ENCODE measurements at regions of chr1 and their contacts with region 1.

Region 1: DNA sequence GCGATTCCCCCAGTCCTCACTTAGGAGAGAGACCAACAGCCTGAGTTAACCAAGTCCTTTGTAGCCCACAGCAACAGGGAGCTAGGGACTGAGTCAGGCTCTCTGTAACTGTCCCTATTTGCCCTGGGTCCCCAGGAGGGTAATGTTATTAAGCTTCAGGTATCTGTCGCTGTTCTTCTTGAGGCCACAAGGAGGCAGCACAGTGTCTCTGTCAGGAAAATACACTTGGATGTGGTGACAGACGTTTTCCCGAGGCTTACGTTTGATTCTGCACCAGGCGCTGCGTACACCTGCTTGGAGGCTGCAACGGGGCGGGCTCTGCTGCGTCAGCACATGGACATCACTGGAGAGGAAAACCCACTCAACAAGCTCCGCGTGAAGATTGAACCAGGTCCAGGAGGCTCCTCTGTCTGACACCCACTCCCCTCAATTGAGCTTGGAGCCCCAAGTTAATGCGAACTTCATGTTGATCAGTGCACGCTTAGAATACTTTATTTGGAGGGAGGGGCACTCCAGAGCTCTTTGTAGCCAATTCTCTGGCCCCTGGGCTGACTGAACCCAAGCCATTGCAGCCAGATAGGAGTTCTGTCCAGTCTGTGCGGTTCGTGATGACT is 10.7 kb upstream of the ELF3 start:
- DNase-seq: peak; percentile 67
- CTCF ChIP-seq: peak; percentile 65

Region 2: GRCh38 chr1:201769966-201770365 is 229.8 kb before region 1 on chr1:
- CTCF ChIA-PET with region 1: no interaction called
- POLR2A ChIA-PET with region 1: no interaction called
- DNase-seq: no peak
- CTCF ChIP-seq: no peak

Region 3: DNA sequence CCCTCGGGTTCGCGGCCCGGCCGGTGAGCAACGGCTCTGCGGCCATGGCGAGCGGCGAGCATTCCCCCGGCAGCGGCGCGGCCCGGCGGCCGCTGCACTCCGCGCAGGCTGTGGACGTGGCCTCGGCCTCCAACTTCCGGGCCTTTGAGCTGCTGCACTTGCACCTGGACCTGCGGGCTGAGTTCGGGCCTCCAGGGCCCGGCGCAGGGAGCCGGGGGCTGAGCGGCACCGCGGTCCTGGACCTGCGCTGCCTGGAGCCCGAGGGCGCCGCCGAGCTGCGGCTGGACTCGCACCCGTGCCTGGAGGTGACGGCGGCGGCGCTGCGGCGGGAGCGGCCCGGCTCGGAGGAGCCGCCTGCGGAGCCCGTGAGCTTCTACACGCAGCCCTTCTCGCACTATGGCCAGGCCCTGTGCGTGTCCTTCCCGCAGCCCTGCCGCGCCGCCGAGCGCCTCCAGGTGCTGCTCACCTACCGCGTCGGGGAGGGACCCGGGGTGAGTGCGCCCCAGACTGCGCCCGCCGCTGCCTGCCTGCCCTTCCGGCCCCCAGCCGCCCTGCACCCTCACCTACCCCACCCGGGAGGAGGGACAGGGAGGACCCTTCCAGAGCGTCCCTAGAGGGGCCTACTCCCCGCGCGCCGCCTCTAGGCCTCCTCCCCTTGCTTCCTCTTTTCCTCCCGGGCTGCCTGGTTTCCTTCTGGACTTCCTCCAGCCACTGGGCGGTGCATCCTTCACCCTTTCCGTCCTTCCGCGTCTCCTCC is 16.9 kb before region 1 on chr1 and contains the start of gene RNPEP:
- CTCF ChIA-PET with region 1: interaction called, 37 read pairs
- POLR2A ChIA-PET with region 1: interaction called, 9 read pairs
- DNase-seq: peak; percentile 65
- CTCF ChIP-seq: no peak

Region 4: DNA sequence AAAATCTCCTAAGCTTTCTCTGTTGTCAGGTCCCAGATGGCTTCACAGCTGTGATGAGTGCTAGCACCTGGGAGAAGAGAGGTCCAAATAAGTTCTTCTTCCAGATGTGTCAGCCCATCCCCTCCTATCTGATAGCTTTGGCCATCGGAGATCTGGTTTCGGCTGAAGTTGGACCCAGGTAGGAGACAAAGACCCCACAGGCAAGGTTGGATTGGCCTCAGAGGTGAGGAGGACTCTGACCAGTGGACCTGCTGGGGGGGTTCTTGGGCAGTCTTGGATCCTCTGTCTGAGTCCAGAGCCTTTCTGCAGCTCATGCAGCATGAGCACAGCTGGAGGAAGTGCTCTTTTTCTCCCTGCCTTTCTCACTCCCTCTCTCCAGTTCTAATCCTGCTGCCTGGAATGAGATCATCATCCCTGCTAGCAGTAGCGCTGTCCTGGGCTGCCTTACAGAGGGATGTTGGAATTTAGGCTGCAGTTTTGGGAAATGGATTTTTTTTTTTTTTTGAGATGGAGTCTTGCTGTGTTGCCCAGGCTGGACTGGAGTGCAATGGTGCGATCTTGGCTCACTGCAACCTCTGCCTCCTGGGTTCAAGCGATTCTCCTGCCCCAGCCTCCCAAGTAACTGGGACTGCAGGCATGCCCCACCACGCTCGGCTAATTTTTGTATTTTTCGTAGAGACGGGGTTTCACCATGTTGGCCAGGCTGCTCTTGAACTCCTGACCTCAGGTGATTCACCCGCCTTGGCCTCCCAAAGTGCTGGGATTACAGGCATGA is 10.2 kb before region 1 on chr1:
- CTCF ChIA-PET with region 1: interaction called, 37 read pairs
- POLR2A ChIA-PET with region 1: no interaction called
- DNase-seq: no peak
- CTCF ChIP-seq: no peak

Region 5: GRCh38 chr1:202122639-202123335 is 123.1 kb after region 1 on chr1 and contains the start of gene GPR37L1:
- CTCF ChIA-PET with region 1: interaction called, 86 read pairs
- POLR2A ChIA-PET with region 1: no interaction called
- DNase-seq: no peak
- CTCF ChIP-seq: no peak